Activated B cell treated with CpG ODN at 0.5 μM for 24 hours (primary cell): ENCODE measurements at regions of chr6 and their contacts with region 1.

Region 1: DNA sequence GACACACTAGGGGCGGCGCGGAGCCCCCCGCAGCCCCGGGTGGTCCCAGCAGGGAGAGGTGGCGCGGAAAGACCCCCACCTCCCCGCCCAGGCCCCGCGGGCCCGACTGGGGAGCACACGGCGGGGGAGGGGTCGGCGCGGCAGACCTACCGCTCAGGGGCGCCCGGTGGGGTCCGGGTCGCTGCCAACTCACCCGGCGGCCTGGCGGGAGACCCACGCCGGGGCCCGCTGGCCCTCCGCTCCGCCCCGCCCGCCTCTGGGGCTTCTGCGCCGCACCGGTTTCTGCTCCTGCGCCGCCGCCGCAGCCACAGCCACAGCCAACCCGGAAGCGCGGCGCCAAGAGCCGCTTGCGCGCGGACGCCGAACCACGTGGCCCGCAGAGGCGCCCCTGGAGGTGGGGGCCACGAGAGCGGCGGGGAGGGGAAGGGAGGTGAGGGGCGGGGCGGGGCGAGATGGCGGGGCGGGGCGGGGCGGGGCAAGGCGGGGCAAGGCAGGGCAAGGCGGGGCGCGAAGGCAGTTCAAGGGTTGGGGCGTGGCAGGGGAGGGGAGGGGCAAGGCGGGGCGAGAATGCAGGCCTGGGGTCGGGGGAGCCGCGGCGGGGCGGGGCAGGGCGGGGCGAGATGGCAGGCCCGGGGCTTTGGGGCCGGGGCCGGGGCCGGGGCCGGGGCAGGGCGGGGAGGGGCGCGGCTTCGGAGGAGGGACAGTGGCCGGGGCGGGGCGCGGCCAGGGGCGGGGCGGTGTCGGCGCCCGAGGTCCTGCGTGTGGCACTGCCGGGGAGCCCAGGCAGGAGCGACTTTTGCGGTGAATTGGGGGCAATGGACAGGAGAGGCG is at the start of gene ZBTB24:
- DNase-seq: peak; percentile 81
- ATAC-seq: peak; percentile 82
- H3K4me3 Mint-ChIP-seq: peak within 1 kb of the TSS; percentile 95
- H3K27ac Mint-ChIP-seq: peak within 1 kb of the TSS; percentile 85
- H3K4me1 Mint-ChIP-seq: peaks cover 52% of the 10 kb centered on the region
- H3K27me3 Mint-ChIP-seq: no peaks in the 10 kb centered on the region
- CTCF ChIP-seq: no peak
- total RNA-seq, gene ZBTB24: 22.8 and 25.4 TPM in 2 replicates

Region 2: GRCh38 chr6:109411034-109411433 is 72.1 kb before region 1 on chr6:
- CTCF ChIA-PET with region 1: no interaction called
- POLR2A ChIA-PET with region 1: no interaction called
- intact Hi-C with region 1: no loop called
- DNase-seq: no peak
- ATAC-seq: no peak
- H3K4me3 Mint-ChIP-seq: no peak overlapping the region
- H3K27ac Mint-ChIP-seq: no peak overlapping the region
- H3K4me1 Mint-ChIP-seq: no peaks in the 10 kb centered on the region
- H3K27me3 Mint-ChIP-seq: peaks cover 4% of the 10 kb centered on the region
- CTCF ChIP-seq: no peak

Region 3: DNA sequence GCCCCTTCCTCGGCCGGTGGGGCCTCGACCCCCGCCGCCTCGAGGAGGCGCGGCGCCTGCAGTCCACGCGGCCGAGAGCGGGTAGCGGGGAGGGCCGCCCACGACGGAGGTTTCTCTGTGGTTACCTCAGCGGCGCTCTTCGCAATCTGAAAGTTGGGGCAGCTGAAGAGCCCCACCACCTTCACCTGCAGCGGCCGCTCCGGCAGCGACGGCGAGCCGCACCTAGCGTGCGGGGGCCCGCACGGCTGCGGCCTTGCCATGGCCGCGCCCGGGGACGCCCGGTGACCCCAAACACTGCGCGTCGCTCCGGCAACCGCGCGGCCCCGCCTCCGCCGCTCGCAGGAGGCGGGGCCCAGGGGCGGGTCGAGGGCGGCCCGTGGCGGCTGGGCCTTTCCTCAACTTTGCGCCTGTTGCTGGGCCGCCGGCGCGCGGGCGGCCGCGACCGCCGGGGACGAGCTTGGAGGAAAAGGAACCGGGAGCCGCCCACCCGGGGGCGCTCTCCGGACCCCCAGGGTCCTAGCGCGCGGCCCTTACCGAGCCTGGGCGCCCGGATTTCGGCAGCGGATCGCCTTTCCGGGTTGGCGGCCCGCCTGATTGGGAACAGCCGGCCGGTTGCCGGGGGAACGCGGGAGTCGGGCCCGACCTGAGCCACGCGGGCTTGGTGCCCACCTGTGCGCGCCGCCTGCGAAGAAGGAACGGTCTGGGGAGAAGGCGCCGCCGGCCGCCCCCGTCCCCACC is 42.6 kb before region 1 on chr6 and contains the starts of genes PPIL6 and SMPD2:
- CTCF ChIA-PET with region 1: interaction called, 7 read pairs
- POLR2A ChIA-PET with region 1: interaction called, 15 read pairs
- intact Hi-C with region 1: loop called (anchors 1 kb)
- DNase-seq: peak; percentile 89
- ATAC-seq: peak; percentile 83
- H3K4me3 Mint-ChIP-seq: peak within 1 kb of the TSS; percentile 96
- H3K27ac Mint-ChIP-seq: peak within 1 kb of the TSS; percentile 95
- H3K4me1 Mint-ChIP-seq: peaks cover 34% of the 10 kb centered on the region
- H3K27me3 Mint-ChIP-seq: no peaks in the 10 kb centered on the region
- CTCF ChIP-seq: no peak
- total RNA-seq, gene PPIL6: 0.73 and 0.91 TPM in 2 replicates
- total RNA-seq, gene SMPD2: 24.9 and 28.2 TPM in 2 replicates

Region 4: GRCh38 chr6:109455502-109456282 is 27.4 kb before region 1 on chr6 and contains the start of gene MICAL1:
- CTCF ChIA-PET with region 1: interaction called, 3 read pairs
- POLR2A ChIA-PET with region 1: interaction called, 70 read pairs
- intact Hi-C with region 1: loop called (anchors 1 kb)
- DNase-seq: peak; percentile 82
- ATAC-seq: peak; percentile 58
- H3K4me3 Mint-ChIP-seq: peak within 1 kb of the TSS; percentile 97
- H3K27ac Mint-ChIP-seq: peak within 1 kb of the TSS; percentile 98
- H3K4me1 Mint-ChIP-seq: peaks cover 80% of the 10 kb centered on the region
- H3K27me3 Mint-ChIP-seq: no peaks in the 10 kb centered on the region
- CTCF ChIP-seq: no peak
- total RNA-seq, gene MICAL1: 104 and 120 TPM in 2 replicates

Region 5: DNA sequence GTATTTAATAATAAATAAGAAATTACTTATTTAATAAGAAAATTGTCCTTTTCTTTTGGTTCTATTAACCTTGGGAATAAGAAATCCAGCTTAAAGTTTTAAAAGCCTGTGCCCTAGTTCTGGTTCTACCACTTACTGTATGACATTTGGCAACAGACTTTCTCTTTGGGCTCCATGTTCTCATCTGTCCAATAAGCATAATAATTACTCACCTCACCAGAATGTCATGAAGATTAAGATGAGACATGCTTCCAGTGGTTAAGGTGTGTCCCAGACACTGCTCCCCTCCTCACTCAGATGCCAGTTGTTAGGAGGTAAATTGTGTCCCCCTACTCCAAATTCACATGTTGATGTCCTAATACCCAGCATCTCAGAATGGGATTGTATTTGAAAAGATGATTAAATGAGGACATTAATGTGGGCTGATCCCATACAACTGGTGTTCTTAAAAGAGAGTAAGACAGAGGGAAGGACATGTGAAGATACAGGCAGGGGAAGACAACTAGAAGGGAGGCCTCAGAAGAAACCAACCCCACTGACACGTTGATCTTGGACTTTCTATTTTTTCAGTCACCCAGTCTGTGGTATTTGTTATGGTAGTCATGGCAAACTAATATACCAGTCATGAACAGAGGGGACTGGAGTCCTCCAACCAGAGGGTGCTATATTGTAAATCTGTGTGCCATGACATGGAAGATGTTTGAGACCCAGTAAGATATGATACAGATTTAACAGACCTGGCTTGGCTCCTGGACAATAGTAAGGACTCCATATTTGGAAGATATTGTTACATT is 21.2 kb before region 1 on chr6:
- CTCF ChIA-PET with region 1: interaction called, 3 read pairs
- POLR2A ChIA-PET with region 1: interaction called, 70 read pairs
- intact Hi-C with region 1: loop called (anchors 1 kb)
- DNase-seq: no peak
- ATAC-seq: no peak
- H3K4me3 Mint-ChIP-seq: no peak overlapping the region
- H3K27ac Mint-ChIP-seq: peak overlapping the region; percentile 68
- H3K4me1 Mint-ChIP-seq: peaks cover 65% of the 10 kb centered on the region
- H3K27me3 Mint-ChIP-seq: no peaks in the 10 kb centered on the region
- CTCF ChIP-seq: no peak

Region 6: GRCh38 chr6:109472132-109472995 is 10.8 kb before region 1 on chr6:
- CTCF ChIA-PET with region 1: no interaction called
- POLR2A ChIA-PET with region 1: interaction called, 9 read pairs
- intact Hi-C with region 1: loop called (anchors 1 kb)
- DNase-seq: peak; percentile 42
- ATAC-seq: peak; percentile 96
- H3K4me3 Mint-ChIP-seq: peak overlapping the region; percentile 11
- H3K27ac Mint-ChIP-seq: peak overlapping the region; percentile 67
- H3K4me1 Mint-ChIP-seq: peaks cover 64% of the 10 kb centered on the region
- H3K27me3 Mint-ChIP-seq: no peaks in the 10 kb centered on the region
- CTCF ChIP-seq: no peak

Region 7: GRCh38 chr6:109493865-109494264 is 10.7 kb after region 1 on chr6:
- CTCF ChIA-PET with region 1: no interaction called
- POLR2A ChIA-PET with region 1: no interaction called
- intact Hi-C with region 1: loop called (anchors 1 kb)
- DNase-seq: no peak
- ATAC-seq: peak; percentile 62
- H3K4me3 Mint-ChIP-seq: no peak overlapping the region
- H3K27ac Mint-ChIP-seq: no peak overlapping the region
- H3K4me1 Mint-ChIP-seq: peaks cover 19% of the 10 kb centered on the region
- H3K27me3 Mint-ChIP-seq: no peaks in the 10 kb centered on the region
- CTCF ChIP-seq: no peak

Region 8: DNA sequence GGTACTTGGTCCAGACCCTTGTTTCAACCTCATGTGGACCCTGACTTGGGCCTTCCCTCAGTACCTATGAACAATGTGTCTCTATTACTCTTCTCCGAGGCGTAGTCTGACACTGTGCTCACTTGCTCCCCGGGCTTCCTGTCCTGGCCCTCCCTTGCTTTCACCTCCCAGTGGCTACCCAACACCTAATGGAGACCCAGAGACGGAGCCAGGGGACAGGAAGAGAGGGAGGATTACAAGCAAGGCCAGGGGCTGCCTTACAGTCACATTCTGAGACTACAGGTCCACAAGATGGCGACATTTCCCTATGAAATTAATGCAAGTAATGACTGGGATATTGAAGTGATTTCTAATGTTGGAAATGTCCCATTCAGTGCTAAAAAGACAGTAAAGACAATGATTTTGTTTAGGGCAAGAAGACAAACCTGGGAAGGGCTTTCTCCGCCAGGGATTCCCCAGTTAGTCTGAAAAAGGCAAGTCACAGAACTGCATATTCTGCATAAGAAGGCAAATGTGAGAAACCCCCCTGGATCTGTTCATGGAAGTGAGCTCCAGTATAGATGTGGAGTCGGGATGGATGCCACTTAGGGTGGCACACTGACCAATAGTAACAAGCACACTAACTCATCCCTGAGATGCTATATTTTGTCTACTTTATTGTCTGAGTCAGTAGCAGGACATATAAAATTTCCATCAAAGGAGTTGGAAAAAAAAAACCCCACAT is 43.9 kb after region 1 on chr6:
- CTCF ChIA-PET with region 1: no interaction called
- POLR2A ChIA-PET with region 1: no interaction called
- intact Hi-C with region 1: no loop called
- DNase-seq: peak; percentile 27
- ATAC-seq: peak; percentile 58
- H3K4me3 Mint-ChIP-seq: no peak overlapping the region
- H3K27ac Mint-ChIP-seq: no peak overlapping the region
- H3K4me1 Mint-ChIP-seq: peaks cover 2% of the 10 kb centered on the region
- H3K27me3 Mint-ChIP-seq: no peaks in the 10 kb centered on the region
- CTCF ChIP-seq: no peak

Region 9: DNA sequence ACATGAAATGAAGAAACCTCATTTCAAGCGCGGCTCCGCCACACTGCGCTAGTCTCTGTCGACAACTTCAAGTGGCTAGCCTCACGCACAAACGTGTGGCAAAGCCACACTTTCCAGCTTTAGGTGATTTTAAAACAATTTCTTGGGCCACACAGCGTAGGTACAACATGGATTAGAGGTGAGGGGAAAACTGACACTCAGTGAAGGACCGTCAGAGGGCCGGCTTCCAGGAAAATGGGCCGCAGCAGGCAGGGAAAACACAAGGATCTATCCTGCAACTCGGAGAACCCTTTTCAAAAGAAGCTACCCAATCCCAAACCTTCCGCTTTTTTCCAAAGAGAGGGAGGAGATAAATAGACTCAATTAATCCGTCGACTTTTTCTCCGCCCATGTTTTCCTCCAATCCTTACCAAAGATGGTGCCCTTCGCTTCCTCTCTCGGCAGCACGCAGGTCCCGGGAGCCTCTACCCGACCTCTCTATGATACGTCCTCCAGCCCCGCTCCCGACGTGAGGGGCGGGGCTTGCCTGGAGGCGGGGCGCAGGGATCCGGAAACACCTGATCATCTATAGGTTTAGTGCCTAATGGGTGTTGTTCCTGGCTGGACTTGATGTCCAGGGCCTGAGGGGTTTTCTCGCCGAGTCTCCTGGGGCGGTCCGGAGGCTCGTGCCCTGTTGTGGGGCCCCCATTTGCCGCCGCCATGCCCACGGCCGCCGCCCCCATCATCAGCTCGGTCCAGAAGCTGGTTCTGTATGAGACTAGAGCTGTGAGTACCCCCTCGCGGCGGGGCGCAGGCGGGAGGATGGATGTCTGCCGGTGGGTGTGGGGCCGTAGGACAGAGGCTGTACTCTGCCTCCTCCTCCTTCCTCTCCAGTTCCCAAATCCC is 207.9 kb after region 1 on chr6 and contains the starts of genes AK9 and FIG4:
- CTCF ChIA-PET with region 1: no interaction called
- POLR2A ChIA-PET with region 1: no interaction called
- intact Hi-C with region 1: loop called (anchors 1 kb)
- DNase-seq: peak; percentile 88
- ATAC-seq: peak; percentile 93
- H3K4me3 Mint-ChIP-seq: peak within 1 kb of the TSS; percentile 94
- H3K27ac Mint-ChIP-seq: peak within 1 kb of the TSS; percentile 95
- H3K4me1 Mint-ChIP-seq: peaks cover 42% of the 10 kb centered on the region
- H3K27me3 Mint-ChIP-seq: no peaks in the 10 kb centered on the region
- CTCF ChIP-seq: no peak
- total RNA-seq, gene AK9: 9.1 and 10.6 TPM in 2 replicates
- total RNA-seq, gene FIG4: 19.8 and 21.8 TPM in 2 replicates

Region 10: DNA sequence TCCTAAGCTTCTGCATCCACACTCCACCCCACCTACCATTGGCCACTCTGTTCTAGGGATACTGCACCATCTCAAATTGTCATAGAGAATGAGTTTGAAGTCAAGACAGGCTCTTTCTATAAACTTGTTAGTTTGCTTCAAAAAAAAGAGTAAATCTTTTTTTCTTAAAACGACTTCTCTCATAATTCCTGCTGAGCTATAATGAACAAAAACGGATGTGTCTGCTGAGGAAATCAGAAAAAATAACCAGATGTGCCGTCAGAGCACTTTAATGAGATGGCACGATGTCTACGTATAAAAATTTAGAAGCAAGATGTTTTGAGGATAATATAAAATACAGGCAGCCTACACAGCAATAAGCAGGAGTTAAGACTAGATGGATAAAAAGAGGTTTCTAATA is 956.2 kb after region 1 on chr6:
- CTCF ChIA-PET with region 1: no interaction called
- POLR2A ChIA-PET with region 1: no interaction called
- intact Hi-C with region 1: no loop called
- DNase-seq: no peak
- ATAC-seq: no peak
- H3K4me3 Mint-ChIP-seq: no peak overlapping the region
- H3K27ac Mint-ChIP-seq: no peak overlapping the region
- H3K4me1 Mint-ChIP-seq: no peaks in the 10 kb centered on the region
- H3K27me3 Mint-ChIP-seq: peaks cover 13% of the 10 kb centered on the region
- CTCF ChIP-seq: no peak